Common myeloid progenitor, CD34-positive (primary cell): ENCODE measurements at regions of chr11 and their contacts with region 1.

Region 1: DNA sequence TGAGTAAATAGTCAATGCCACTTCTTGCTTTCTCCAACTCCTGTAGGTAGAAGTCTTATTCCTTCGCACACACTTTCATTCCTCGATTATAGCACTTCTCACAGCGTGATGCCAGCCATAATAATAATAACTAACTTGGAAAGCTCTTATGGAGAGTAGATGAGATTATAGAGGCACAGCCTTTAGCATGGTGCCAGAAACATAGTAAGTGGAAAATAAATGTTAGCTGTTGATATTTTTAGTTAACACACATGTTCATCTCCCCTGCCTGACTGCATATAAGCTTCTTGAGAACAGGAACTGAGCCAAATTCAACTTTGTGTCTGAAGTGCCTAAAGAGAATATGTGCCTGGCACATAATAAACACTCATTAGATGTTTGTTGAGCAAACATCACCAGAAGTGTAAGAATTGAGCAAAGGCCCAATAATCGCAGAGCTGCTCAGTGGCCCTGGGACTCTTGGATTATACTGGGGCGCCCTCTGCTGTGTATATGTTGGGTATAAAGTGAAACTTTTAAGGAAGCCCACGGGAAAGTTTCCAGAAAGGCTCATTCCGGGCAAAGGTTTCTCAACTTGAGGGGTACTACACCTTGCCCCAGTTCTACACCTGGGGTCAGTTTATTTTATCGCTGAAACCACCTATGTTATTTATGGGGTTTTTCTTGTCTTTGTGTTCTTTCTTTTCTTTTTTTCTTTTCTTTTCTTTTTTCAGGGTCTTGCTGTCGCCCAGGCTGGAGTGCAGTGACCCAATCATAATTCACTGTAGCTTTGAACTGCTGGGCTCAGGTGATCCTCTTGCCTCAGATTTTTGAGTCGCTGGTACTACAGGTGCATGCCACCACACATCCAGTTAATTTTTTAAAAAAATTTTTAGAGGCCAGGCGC is 22.3 kb downstream of the SLN start:
- DNase-seq: peak; percentile 56 to 75 (median 69)
- H3K4me3 ChIP-seq: no peak overlapping the region
- H3K27ac ChIP-seq: no peak overlapping the region
- H3K4me1 ChIP-seq: no peaks in the 10 kb centered on the region
- H3K27me3 ChIP-seq: peaks cover 0 to 6% (median 2%) of the 10 kb centered on the region in 5 experiments

Region 2: GRCh38 chr11:107467696-107468095 is 221.9 kb before region 1 on chr11:
- CTCF ChIA-PET with region 1: no interaction called
- POLR2A ChIA-PET with region 1: no interaction called
- DNase-seq: no peak
- H3K4me3 ChIP-seq: no peak overlapping the region
- H3K27ac ChIP-seq: no peak overlapping the region
- H3K4me1 ChIP-seq: no peaks in the 10 kb centered on the region
- H3K27me3 ChIP-seq: peaks cover 0 to 5% (median 5%) of the 10 kb centered on the region in 5 experiments

Region 3: DNA sequence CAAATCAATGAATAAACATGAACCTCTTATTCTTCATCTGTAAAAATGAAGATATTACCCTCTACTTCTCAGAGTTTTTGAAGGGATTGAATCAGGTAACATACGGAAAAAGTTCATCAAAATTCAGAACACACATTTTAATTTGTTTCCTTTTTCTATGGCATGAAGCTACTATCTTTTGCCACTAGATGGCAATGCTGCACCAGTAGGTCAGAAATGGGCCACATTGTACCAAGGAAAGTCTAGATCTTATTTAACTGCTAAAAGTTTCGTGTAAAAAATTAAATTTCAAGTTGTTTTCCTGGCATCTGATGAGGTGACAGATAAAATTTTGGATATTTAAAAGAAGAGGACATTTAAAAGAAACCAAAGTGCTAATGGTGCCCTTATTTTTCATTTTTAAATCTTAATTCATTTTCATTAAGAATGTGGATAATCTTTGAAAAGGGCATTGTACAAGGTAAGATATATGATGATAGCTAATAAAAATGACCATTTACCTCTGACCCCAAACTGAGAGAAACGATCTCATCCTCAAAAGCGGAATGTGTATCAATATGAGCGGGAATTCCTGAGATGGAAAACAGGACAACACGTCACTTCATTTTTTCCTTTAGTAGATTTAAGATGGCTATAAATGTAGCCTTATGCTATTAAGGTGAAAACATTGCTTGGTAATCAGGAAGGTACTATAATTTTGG is 140.2 kb before region 1 on chr11:
- CTCF ChIA-PET with region 1: interaction called, 114 read pairs
- POLR2A ChIA-PET with region 1: no interaction called
- DNase-seq: peak; percentile 37 to 69 (median 60)
- H3K4me3 ChIP-seq: no peak overlapping the region
- H3K27ac ChIP-seq: no peak overlapping the region
- H3K4me1 ChIP-seq: peaks cover 0 to 3% (median 1%) of the 10 kb centered on the region in 4 experiments
- H3K27me3 ChIP-seq: no peaks in the 10 kb centered on the region

Region 4: GRCh38 chr11:107565219-107565937 is 124.2 kb before region 1 on chr11 and contains the start of gene ALKBH8:
- CTCF ChIA-PET with region 1: interaction called, 61 read pairs
- POLR2A ChIA-PET with region 1: no interaction called
- DNase-seq: peak; percentile 69 to 87 (median 83)
- H3K4me3 ChIP-seq: peak within 1 kb of the TSS; percentile 81 to 100 (median 95)
- H3K27ac ChIP-seq: peak within 1 kb of the TSS; percentile 53 to 87
- H3K4me1 ChIP-seq: peaks cover 15 to 35% (median 23%) of the 10 kb centered on the region in 4 experiments
- H3K27me3 ChIP-seq: peaks cover 0 to 2% (median 0%) of the 10 kb centered on the region in 5 experiments

Region 5: DNA sequence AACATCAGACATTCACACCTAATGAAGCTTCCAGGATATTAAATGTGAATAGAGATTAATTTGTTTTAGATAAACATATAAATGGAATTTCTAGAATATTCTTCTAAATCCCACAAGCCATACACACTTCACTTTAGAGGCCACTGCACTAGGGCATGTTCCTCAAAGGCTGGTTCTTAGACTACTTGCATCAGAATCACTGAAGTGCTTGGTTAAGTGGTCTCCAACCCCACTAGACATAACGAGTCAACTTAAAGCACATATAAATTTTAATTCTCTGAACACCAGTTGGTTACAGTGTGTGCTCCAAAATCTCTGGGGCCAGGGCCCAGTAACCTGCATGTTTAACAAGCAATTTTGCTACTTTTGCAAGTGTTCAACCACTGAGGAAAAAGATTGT is 116.1 kb before region 1 on chr11:
- CTCF ChIA-PET with region 1: interaction called, 53 read pairs
- POLR2A ChIA-PET with region 1: no interaction called
- DNase-seq: no peak
- H3K4me3 ChIP-seq: no peak overlapping the region
- H3K27ac ChIP-seq: no peak overlapping the region
- H3K4me1 ChIP-seq: no peaks in the 10 kb centered on the region
- H3K27me3 ChIP-seq: peaks cover 0 to 4% (median 0%) of the 10 kb centered on the region in 5 experiments

Region 6: GRCh38 chr11:107699371-107700285 is 10.1 kb after region 1 on chr11:
- CTCF ChIA-PET with region 1: interaction called, 14 read pairs
- POLR2A ChIA-PET with region 1: no interaction called
- DNase-seq: no peak
- H3K4me3 ChIP-seq: no peak overlapping the region
- H3K27ac ChIP-seq: no peak overlapping the region
- H3K4me1 ChIP-seq: no peaks in the 10 kb centered on the region
- H3K27me3 ChIP-seq: peaks cover 2 to 17% (median 7%) of the 10 kb centered on the region in 5 experiments